IMR-90 (cell line): ENCODE measurements at regions of chr16 and their contacts with region 1.

Region 1: DNA sequence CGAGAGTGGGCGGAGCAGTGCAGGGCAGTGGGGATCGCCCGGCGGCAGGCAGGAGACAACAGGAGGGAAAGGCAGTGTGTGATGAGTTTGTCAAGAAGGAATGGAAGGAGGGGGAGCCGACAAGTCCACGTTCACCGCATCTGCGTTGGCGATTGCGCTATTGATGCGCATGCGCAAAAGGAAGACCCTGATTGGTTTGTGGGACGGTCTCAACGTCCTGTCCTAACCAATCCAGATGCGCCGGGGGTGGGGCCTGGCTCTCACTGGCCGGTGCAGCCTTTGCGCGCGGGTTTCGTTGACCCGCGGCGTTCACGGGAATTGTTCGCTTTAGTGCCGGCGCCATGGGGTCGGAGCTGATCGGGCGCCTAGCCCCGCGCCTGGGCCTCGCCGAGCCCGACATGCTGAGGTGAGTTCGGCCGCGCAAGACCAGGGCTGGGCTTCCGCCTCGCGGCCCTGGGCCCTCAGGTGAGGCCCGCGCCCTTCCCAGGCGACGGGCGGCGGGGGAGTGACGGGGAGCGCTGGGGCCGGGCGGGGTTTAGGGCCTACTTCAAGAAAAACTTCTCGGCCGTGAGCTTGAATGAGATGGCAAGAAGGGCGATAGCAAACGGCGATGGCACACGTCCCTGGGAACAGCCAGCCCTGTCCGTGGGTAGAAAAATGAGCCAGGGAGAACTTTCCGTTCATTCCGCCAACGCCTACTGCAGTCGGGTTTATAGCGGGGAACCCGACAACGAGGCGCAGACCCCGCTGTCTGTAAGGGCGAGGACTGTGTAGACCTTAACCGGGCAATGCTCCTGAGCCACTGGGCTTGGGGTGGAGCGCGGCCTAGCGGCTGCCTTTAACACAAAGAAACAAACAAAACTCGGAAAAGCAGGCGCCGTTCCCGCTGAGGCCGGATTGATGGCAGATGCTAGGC is at the start of gene ORC6:
- DNase-seq: peak; percentile 95
- ATAC-seq: peak; percentile 86
- H3K4me3 ChIP-seq: peak within 1 kb of the TSS; percentile 88
- H3K27ac ChIP-seq: peak within 1 kb of the TSS; percentile 92
- H3K4me1 ChIP-seq: peaks cover 6% of the 10 kb centered on the region
- H3K27me3 ChIP-seq: no peaks in the 10 kb centered on the region
- CTCF ChIP-seq: peak; percentile 64
- POLR2A ChIP-seq: peak; percentile 74
- RAD21 ChIP-seq: peak; percentile 58
- total RNA-seq, gene ORC6: 9.0 and 13.1 TPM in 2 replicates

Region 2: DNA sequence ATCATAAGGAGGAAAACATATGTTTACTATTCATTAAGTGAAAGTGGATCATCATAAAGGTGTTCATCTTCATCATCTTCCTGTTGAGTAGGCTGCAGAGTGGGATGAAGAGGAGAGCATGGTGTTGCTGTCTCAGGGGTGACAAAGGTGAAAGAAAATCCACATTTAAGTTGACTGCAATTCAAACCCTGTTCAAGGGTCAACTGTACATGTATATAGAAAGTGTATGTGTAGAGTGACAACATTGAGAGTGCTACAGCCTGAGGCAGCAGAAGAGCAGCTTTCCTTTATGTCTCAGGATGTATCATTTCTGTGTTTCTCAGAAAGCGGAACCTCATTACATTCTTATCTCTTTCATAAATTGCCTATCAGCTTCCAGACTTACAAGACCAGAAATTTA is 17.0 kb after region 1 on chr16:
- CTCF ChIA-PET with region 1: interaction called, 9 read pairs
- POLR2A ChIA-PET with region 1: interaction called, 4 read pairs
- dilution Hi-C with region 1: no loop called
- in situ Hi-C with region 1: no loop called
- intact Hi-C with region 1: loop called (anchors 1 kb)
- DNase-seq: no peak
- ATAC-seq: no peak
- H3K4me3 ChIP-seq: no peak overlapping the region
- H3K27ac ChIP-seq: no peak overlapping the region
- H3K4me1 ChIP-seq: no peaks in the 10 kb centered on the region
- H3K27me3 ChIP-seq: no peaks in the 10 kb centered on the region
- CTCF ChIP-seq: no peak
- POLR2A ChIP-seq: no peak
- RAD21 ChIP-seq: no peak

Region 3: DNA sequence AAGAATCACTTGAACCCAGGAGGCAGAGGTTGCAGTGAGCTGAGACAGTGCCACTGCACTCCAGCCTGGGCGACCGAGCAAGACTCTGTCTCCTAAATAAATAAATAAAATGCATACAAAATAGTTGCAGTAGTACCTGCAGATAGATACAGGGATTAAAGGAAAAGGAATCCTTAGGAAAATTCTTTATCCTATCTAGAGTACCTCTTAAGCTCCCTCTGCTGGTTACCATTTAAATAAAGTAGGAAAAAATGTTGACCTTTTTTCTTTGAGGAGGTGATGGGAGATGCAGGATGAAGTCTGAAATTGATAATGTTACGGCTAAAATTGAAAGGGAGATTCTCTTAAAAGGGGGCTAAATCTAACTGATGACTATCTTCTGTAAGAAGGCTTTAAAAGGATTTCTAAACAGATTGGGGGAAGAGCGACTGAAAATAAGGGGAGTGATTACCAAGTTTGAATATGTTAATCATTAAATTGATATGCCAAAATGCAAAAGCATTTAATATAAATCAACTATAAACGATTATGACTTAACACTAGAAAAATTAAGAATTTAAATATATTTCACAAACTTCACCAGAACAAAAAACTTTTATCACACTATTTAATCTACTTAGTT is 111.9 kb after region 1 on chr16:
- CTCF ChIA-PET with region 1: interaction called, 6 read pairs
- POLR2A ChIA-PET with region 1: no interaction called
- dilution Hi-C with region 1: no loop called
- in situ Hi-C with region 1: no loop called
- intact Hi-C with region 1: loop called (anchors 1 kb)
- DNase-seq: peak; percentile 25
- ATAC-seq: peak; percentile 80
- H3K4me3 ChIP-seq: no peak overlapping the region
- H3K27ac ChIP-seq: no peak overlapping the region; the same call in 1 of the 2 replicates
- H3K4me1 ChIP-seq: no peaks in the 10 kb centered on the region
- H3K27me3 ChIP-seq: no peaks in the 10 kb centered on the region
- CTCF ChIP-seq: peak; percentile 50
- POLR2A ChIP-seq: no peak
- RAD21 ChIP-seq: peak; percentile 40; the same call in 1 of the 2 replicates

Region 4: GRCh38 chr16:46830902-46831647 is 141.5 kb after region 1 on chr16 and contains the start of gene C16orf87:
- CTCF ChIA-PET with region 1: interaction called, 3 read pairs
- POLR2A ChIA-PET with region 1: interaction called, 16 read pairs
- dilution Hi-C with region 1: no loop called
- in situ Hi-C with region 1: no loop called
- intact Hi-C with region 1: loop called (anchors 2 kb)
- DNase-seq: peak; percentile 92
- ATAC-seq: peak; percentile 95
- H3K4me3 ChIP-seq: peak within 1 kb of the TSS; percentile 98
- H3K27ac ChIP-seq: peak within 1 kb of the TSS; percentile 94
- H3K4me1 ChIP-seq: peaks cover 4% of the 10 kb centered on the region; the same call in 1 of the 2 replicates
- H3K27me3 ChIP-seq: no peaks in the 10 kb centered on the region
- CTCF ChIP-seq: no peak
- POLR2A ChIP-seq: peak; percentile 61
- RAD21 ChIP-seq: no peak
- total RNA-seq, gene C16orf87: 6.3 and 16.4 TPM in 2 replicates

Region 5: DNA sequence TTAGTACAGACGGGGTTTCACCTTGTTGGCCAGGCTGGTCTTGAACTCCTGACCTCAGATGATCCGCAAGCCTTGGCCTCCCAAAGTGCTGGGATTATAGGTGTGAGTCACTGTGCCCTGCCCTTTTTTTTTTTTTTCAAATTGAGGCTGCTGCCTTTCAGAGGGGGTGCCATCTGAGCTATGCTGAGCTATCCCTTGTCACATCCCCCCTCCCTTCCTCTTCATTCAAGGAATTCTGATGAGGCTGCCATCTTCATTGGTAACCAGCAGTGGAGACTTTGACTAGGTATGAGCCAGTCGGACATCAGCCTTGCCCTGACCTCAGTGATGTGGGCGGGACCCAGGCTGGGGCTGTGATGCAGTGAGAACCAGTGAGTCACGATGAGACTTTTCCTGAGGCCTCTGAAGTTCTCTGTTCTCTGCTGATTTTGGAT is 170.1 kb after region 1 on chr16:
- CTCF ChIA-PET with region 1: no interaction called
- POLR2A ChIA-PET with region 1: no interaction called
- dilution Hi-C with region 1: no loop called
- in situ Hi-C with region 1: no loop called
- intact Hi-C with region 1: no loop called
- DNase-seq: peak; percentile 91
- ATAC-seq: peak; percentile 99
- H3K4me3 ChIP-seq: no peak overlapping the region
- H3K27ac ChIP-seq: no peak overlapping the region
- H3K4me1 ChIP-seq: peaks cover 4% of the 10 kb centered on the region
- H3K27me3 ChIP-seq: no peaks in the 10 kb centered on the region
- CTCF ChIP-seq: no peak
- POLR2A ChIP-seq: no peak
- RAD21 ChIP-seq: no peak

Region 6: DNA sequence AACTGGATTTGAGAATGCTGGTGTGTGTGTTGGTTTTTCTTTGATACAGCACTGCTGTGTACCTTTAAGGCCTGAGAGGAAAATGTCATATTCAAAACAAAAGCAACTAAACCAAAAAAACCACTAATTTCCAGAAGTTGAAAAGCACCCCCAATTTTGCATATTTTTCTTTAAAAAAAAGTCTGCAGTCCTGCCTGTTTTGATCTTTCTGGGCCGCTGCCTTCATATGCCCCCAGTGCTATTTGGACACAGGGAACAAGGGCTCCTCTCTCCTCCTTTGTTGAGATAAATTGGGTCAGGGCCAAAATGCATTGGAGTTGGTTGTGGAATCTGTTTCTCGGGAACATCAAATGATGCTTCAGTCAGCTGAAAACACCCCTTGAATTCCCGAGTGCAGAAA is 221.4 kb after region 1 on chr16:
- CTCF ChIA-PET with region 1: no interaction called
- POLR2A ChIA-PET with region 1: no interaction called
- dilution Hi-C with region 1: no loop called
- in situ Hi-C with region 1: no loop called
- intact Hi-C with region 1: no loop called
- DNase-seq: no peak
- ATAC-seq: no peak
- H3K4me3 ChIP-seq: no peak overlapping the region
- H3K27ac ChIP-seq: no peak overlapping the region
- H3K4me1 ChIP-seq: no peaks in the 10 kb centered on the region
- H3K27me3 ChIP-seq: no peaks in the 10 kb centered on the region
- CTCF ChIP-seq: no peak
- POLR2A ChIP-seq: no peak
- RAD21 ChIP-seq: no peak

Region 7: DNA sequence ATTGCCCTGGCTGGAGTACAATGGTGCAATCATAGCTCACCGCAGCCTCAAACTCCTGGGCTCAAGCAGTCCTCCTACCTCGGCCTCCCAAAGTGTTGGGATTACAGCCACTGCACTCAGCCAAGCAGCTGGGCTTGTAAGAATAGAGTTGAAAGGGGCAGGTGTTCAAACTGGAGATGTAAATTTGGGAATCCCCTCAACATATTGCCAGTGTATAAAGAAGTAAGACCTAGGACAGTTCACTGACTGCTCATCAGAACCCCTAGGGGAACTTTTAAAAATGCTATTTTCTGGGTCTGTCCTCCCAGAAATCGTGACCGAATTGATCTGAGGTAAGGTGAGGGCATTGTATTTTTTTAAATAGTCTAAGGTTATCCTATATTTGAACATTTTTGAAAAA is 292.7 kb after region 1 on chr16:
- CTCF ChIA-PET with region 1: no interaction called
- POLR2A ChIA-PET with region 1: no interaction called
- dilution Hi-C with region 1: no loop called
- in situ Hi-C with region 1: no loop called
- intact Hi-C with region 1: no loop called
- DNase-seq: no peak
- ATAC-seq: no peak
- H3K4me3 ChIP-seq: no peak overlapping the region
- H3K27ac ChIP-seq: no peak overlapping the region
- H3K4me1 ChIP-seq: no peaks in the 10 kb centered on the region
- H3K27me3 ChIP-seq: no peaks in the 10 kb centered on the region; the same call in 1 of the 2 replicates
- CTCF ChIP-seq: no peak
- POLR2A ChIP-seq: no peak
- RAD21 ChIP-seq: no peak